ENCODE measurements at regions of chr19 and their contacts with region 1.

Region 1: DNA sequence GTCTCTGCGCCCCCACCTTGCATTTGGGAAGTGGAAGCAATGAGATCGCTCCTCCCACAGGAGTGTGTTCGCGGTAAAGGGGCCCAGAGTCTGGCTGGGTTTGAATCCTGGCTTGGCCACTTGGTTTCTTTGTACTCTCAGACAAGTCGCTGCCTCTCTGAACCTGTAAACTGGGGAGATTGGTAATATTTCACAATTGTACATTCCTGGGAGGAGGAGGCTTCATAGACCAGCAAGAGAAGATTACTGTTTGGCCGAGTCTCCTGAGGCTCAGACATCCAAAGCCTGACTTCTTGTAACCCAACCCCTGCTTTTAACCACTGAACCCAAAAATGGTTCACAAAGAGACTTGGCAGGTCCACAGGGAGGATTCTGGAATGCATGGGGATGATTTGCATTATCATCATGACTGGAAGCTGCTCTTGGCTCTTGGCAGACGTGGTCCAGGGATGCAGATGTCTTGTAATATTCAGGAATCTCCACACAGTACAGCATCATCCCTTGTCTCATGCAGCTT is 13.6 kb upstream of the STRN4 start:
- DNase-seq: no peak
- H3K4me3 ChIP-seq: no peak overlapping the region
- H3K27ac ChIP-seq: no peak overlapping the region
- H3K4me1 ChIP-seq: peaks cover 0 to 6% (median 0%) of the 10 kb centered on the region in 3 donors
- H3K27me3 ChIP-seq: no peaks in the 10 kb centered on the region
- CTCF ChIP-seq: no peak

Region 2: GRCh38 chr19:46599716-46600378 is 160.0 kb before region 1 on chr19:
- intact Hi-C with region 1: no loop called
- DNase-seq: no peak
- H3K4me3 ChIP-seq: peak overlapping the region; percentile 92 to 97 (median 94)
- H3K27ac ChIP-seq: peak overlapping the region in 1 of 2 donors; percentile 100
- H3K4me1 ChIP-seq: peaks cover 0 to 23% (median 16%) of the 10 kb centered on the region in 3 donors
- H3K27me3 ChIP-seq: no peaks in the 10 kb centered on the region
- CTCF ChIP-seq: no peak

Region 3: DNA sequence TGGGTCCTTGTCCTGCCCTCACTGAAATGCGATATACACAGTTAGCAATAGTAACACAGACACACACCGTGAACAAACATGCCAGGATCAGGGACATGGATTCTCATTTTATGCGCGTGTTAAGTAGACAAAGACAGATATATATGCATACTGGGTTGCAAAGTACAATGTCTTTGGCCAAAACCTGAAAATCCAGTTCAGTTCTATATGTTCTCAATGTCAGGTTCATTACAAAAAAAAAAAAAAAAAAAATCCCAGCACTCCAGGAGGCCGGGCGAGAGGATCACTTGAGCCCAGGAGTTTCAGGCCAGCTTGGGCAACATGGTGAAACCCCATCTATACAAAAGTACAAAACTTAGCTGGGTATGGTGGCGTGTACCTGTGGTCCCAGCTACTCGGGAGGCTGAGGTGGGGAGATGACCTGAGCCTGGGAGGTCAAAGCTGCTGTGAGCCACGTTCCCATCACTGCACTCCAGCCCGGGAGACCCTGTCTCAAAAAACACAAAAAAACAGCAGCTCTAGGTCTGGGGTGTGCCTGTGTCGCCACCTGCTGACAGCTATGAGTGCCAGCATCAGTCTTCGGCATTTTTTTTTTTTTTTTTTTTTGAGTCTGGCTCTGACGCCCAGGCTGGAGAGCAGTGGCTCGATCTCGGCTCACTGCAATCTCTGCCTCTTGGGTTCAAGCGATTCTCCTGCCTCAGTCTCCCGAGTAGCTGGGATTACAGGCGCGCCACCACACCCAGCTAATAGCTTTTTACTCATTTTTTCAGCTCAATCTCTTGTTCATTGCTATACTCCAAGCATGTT is 80.5 kb after region 1 on chr19:
- intact Hi-C with region 1: loop called (anchors 5 kb)
- DNase-seq: peak in 4 of 5 donors; percentile 68 to 89 (median 81)
- H3K4me3 ChIP-seq: no peak overlapping the region
- H3K27ac ChIP-seq: no peak overlapping the region
- H3K4me1 ChIP-seq: peaks cover 0 to 5% (median 3%) of the 10 kb centered on the region in 3 donors
- H3K27me3 ChIP-seq: no peaks in the 10 kb centered on the region
- CTCF ChIP-seq: peak; percentile 95

Region 4: GRCh38 chr19:47112997-47113849 is 353.3 kb after region 1 on chr19 and contains the start of gene ZC3H4:
- intact Hi-C with region 1: no loop called
- DNase-seq: peak; percentile 100
- H3K4me3 ChIP-seq: peak within 1 kb of the TSS; percentile 89 to 96 (median 93)
- H3K27ac ChIP-seq: peak within 1 kb of the TSS; percentile 100
- H3K4me1 ChIP-seq: peaks cover 0 to 23% (median 15%) of the 10 kb centered on the region in 3 donors
- H3K27me3 ChIP-seq: no peaks in the 10 kb centered on the region
- CTCF ChIP-seq: no peak
- total RNA-seq, gene ZC3H4: 55.2 TPM

Measured in kidney (tissue), 22 donors.